Vagina (tissue), 2 donors: ENCODE measurements at regions of chr9 and their contacts with region 1.

Region 1: DNA sequence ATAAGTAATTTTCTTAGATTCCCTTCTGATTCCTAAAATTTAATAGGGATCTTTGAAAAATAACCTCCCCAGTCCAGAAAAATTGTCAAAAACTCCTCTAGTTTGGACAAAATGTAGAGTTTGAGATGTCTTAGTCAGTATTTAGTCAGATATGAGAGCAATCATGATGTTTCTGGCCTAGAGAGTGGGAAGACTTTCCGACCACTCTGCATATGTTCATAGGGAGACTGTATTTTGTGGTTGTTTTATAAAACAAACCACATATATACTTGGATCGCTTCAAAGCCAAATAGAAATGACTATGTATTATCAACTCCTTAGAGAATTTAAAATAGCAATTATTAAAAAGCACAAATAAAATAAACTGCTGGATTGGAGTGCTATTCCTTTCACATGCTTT is 15.8 kb downstream of the ZFAND5 start:
- DNase-seq: no peak
- H3K4me3 ChIP-seq: no peak overlapping the region
- H3K27ac ChIP-seq: no peak overlapping the region
- H3K4me1 ChIP-seq: no peaks in the 10 kb centered on the region
- H3K27me3 ChIP-seq: no peaks in the 10 kb centered on the region
- CTCF ChIP-seq: no peak
- POLR2A ChIP-seq: no peak

Region 2: GRCh38 chr9:72173081-72173480 is 176.2 kb before region 1 on chr9:
- intact Hi-C with region 1: no loop called
- DNase-seq: no peak
- H3K4me3 ChIP-seq: no peak overlapping the region
- H3K27ac ChIP-seq: no peak overlapping the region
- H3K4me1 ChIP-seq: no peaks in the 10 kb centered on the region
- H3K27me3 ChIP-seq: no peaks in the 10 kb centered on the region
- CTCF ChIP-seq: no peak
- POLR2A ChIP-seq: no peak

Region 3: GRCh38 chr9:72300873-72301272 is 48.4 kb before region 1 on chr9:
- intact Hi-C with region 1: loop called (anchors 5 kb)
- DNase-seq: no peak
- H3K4me3 ChIP-seq: no peak overlapping the region
- H3K27ac ChIP-seq: no peak overlapping the region
- H3K4me1 ChIP-seq: peaks cover 16% of the 10 kb centered on the region
- H3K27me3 ChIP-seq: no peaks in the 10 kb centered on the region
- CTCF ChIP-seq: no peak
- POLR2A ChIP-seq: no peak